GM12878 (cell line): ENCODE measurements at regions of chr3 and their contacts with region 1.

Region 1: DNA sequence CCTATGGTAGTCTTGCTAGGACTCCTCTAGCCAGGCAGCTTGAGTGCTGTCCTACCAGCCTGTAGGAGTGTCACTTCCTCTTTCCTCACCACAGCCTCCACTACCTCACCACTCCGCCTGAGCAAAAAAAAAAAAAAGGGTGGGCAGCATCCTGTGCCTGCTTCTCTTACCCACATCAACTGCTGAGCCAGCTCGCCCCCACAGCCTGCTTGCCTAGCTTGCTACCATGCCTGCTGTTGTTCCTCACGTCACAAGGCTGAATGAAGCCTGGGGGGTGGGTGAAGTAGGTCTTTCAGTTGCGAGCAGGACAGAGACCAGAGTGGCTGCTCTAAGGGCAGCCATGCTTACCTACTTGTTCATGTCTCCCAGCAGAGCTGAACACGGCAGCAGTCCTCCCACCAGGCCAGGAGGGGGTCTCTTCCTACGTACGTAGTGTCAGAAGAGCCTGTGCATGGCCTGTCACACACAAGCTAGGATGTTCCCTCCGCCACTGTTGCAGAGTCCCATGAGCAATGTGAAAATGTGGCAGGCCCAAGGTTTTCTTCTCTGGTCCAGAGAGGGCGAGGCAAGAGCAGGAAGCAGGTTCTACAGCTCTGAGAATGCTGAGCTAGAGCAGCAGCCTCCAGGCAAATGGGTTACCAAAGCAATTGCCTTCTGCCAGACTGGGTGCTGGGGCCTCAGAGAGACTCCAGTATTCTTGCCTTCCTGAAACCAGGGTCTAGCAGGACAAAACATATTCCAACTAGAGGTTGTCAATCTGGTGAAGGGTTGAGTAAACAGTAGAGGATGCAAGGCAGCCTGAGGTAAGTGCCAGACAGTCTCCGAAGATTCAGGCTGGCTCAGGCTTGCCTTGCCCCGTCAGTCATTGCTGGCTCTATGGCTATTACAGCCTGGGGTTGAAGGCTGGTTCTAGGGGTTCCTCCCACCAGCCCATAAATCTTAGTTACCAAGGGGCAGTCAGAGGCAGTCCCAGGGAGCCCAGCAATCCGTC is 8.1 kb downstream of the PPM1M start:
- DNase-seq: peak; percentile 85
- ATAC-seq: peak; percentile 98
- H3K4me3 ChIP-seq: no peak overlapping the region
- H3K27ac ChIP-seq: peak overlapping the region; percentile 88
- H3K4me1 ChIP-seq: peaks cover 18% of the 10 kb centered on the region
- H3K27me3 ChIP-seq: no peaks in the 10 kb centered on the region
- CTCF ChIP-seq: no peak
- EP300 ChIP-seq: peak; percentile 66 to 86; a peak in 3 of 4 replicates
- POLR2A ChIP-seq: peak; percentile 75
- RAD21 ChIP-seq: 0 out of 2 replicates have a peak, but pooled peaks have one; percentile 2

Region 2: DNA sequence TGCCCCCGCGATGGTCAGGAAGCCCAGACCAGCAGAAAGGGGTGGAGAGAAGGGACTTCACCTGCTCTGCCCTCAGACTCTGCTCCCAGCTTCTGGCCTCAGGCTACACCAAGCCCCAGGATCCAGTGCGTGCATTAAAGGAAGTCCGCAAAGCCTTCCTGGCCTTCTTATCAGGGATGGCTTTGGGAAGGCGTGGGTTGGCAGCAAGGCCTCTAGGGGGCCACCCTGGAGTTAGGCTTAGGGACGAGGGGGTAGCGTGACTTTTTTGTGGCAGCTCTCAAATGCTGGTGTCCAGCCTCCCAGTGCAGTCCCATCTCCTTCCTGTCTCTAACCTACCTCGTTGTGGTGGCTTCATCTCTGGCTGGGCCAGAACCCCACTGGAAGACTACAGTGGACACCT is 239.0 kb before region 1 on chr3:
- CTCF ChIA-PET with region 1: no interaction called
- POLR2A ChIA-PET with region 1: no interaction called
- RAD21 ChIA-PET with region 1: no interaction called
- SMC1A ChIA-PET with region 1: no interaction called
- in situ Hi-C with region 1: no loop called
- intact Hi-C with region 1: no loop called
- DNase-seq: no peak
- ATAC-seq: peak; percentile 22
- H3K4me3 ChIP-seq: no peak overlapping the region
- H3K27ac ChIP-seq: no peak overlapping the region
- H3K4me1 ChIP-seq: peaks cover 4% of the 10 kb centered on the region
- H3K27me3 ChIP-seq: no peaks in the 10 kb centered on the region
- CTCF ChIP-seq: 0 out of 6 replicates have a peak, but pooled peaks of 1 of the 3 experiments have one; percentile 17
- EP300 ChIP-seq: no peak
- POLR2A ChIP-seq: no peak
- RAD21 ChIP-seq: peak; percentile 3; the same call in 1 of the 2 replicates

Region 3: DNA sequence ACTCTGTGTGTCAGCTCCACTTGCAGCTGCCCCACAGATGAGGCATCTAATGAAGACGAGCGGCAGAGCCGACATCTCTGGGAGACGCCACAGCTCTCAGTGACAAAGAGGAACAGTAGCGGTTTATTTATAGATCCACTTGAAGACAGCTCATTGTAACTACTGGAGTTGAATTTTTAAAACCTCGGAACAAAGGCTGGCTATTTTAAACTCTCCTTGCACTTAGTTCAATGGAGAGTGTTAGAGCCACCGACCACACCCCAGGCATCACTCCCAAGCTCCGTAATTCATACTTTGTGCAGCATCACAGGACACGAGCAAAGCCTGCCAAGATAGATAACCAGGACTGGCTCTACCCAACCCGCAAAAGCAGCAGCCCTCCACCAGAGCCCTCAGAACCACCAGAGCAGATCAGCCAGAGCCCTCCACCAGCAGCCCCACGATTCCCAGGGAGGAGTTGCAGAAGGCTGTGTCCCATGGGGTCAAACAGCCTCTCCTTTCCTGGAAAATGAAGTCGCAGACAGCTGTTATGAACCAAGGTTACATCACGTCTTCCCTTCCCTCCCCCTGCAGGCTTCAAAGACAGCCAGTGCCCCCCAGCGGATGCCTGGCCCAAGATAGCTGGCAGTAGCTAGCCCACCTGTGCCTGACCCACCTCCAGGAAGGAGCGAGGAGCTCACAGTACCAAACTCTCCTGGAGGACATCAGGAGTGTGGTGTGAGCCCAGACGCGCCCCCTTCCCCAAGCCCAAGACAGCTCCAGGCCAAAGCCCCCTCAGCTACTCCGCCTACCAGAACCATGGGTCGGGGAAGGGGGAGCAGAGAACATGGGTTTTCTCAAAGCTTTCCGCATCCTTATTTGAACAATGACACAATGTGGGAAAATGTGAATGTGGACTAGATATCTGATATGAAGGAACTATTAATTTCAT is 145.0 kb before region 1 on chr3:
- CTCF ChIA-PET with region 1: no interaction called
- POLR2A ChIA-PET with region 1: no interaction called
- RAD21 ChIA-PET with region 1: no interaction called
- SMC1A ChIA-PET with region 1: no interaction called
- in situ Hi-C with region 1: no loop called
- intact Hi-C with region 1: no loop called
- DNase-seq: no peak
- ATAC-seq: peak; percentile 51; the same call in 2 of the 3 replicates
- H3K4me3 ChIP-seq: no peak overlapping the region
- H3K27ac ChIP-seq: no peak overlapping the region
- H3K4me1 ChIP-seq: no peaks in the 10 kb centered on the region
- H3K27me3 ChIP-seq: no peaks in the 10 kb centered on the region
- CTCF ChIP-seq: peak in 1 of 3 experiments; percentile 5; a peak in 2 of 6 replicates
- EP300 ChIP-seq: no peak
- POLR2A ChIP-seq: no peak
- RAD21 ChIP-seq: peak; percentile 37; the same call in 1 of the 2 replicates

Region 4: GRCh38 chr3:52238761-52239701 is 14.6 kb before region 1 on chr3 and contains the start of gene TWF2:
- CTCF ChIA-PET with region 1: interaction called, 16 read pairs
- POLR2A ChIA-PET with region 1: interaction called, 49 read pairs
- RAD21 ChIA-PET with region 1: interaction called, 11 read pairs
- SMC1A ChIA-PET with region 1: interaction called, 22 read pairs
- in situ Hi-C with region 1: no loop called
- intact Hi-C with region 1: no loop called
- DNase-seq: no peak
- ATAC-seq: peak; percentile 87
- H3K4me3 ChIP-seq: peak within 1 kb of the TSS; percentile 93
- H3K27ac ChIP-seq: peak within 1 kb of the TSS; percentile 88
- H3K4me1 ChIP-seq: peaks cover 40% of the 10 kb centered on the region
- H3K27me3 ChIP-seq: no peaks in the 10 kb centered on the region
- CTCF ChIP-seq: peak; percentile 43 to 49 (median 43)
- EP300 ChIP-seq: no peak
- POLR2A ChIP-seq: peak; percentile 91
- RAD21 ChIP-seq: peak; percentile 30; the same call in 1 of the 2 replicates
- polyA plus RNA-seq, gene TWF2: 0.16 to 3.4 TPM